ENCODE measurements at regions of chr5 and their contacts with region 1.

Region 1: GRCh38 chr5:14956413-14957046 is 85.0 kb upstream of the ANKH start:
- DNase-seq: no peak
- H3K4me3 ChIP-seq: no peak overlapping the region
- H3K4me3 Mint-ChIP-seq: no peak overlapping the region
- H3K27ac ChIP-seq: no peak overlapping the region
- H3K27ac Mint-ChIP-seq: no peak overlapping the region
- H3K4me1 ChIP-seq: no peaks in the 10 kb centered on the region
- H3K4me1 Mint-ChIP-seq: no peaks in the 10 kb centered on the region
- H3K27me3 ChIP-seq: no peaks in the 10 kb centered on the region
- H3K27me3 Mint-ChIP-seq: peaks cover 7 to 8% of the 10 kb centered on the region in 2 donors

Region 2: GRCh38 chr5:15003511-15003920 is 47.0 kb after region 1 on chr5:
- CTCF ChIA-PET with region 1: interaction called, 11 read pairs
- POLR2A ChIA-PET with region 1: no interaction called
- DNase-seq: peak; percentile 36 to 67 (median 57)
- H3K4me3 ChIP-seq: no peak overlapping the region
- H3K4me3 Mint-ChIP-seq: no peak overlapping the region
- H3K27ac ChIP-seq: no peak overlapping the region
- H3K27ac Mint-ChIP-seq: peak overlapping the region in 1 of 8 donors; percentile 22
- H3K4me1 ChIP-seq: no peaks in the 10 kb centered on the region
- H3K4me1 Mint-ChIP-seq: no peaks in the 10 kb centered on the region
- H3K27me3 ChIP-seq: no peaks in the 10 kb centered on the region
- H3K27me3 Mint-ChIP-seq: peaks cover 8 to 37% of the 10 kb centered on the region in 2 donors